Ovary (tissue), 10 donors: ENCODE measurements at regions of chr3 and their contacts with region 1.

Region 1: GRCh38 chr3:15205934-15206661 is at the start of gene CAPN7:
- DNase-seq: peak; percentile 93 to 97 (median 94)
- H3K4me3 ChIP-seq: peak within 1 kb of the TSS; percentile 52
- H3K27ac ChIP-seq: peak within 1 kb of the TSS; percentile 92 to 95
- H3K4me1 ChIP-seq: peaks cover 4% of the 10 kb centered on the region
- H3K27me3 ChIP-seq: no peaks in the 10 kb centered on the region
- CTCF ChIP-seq: peak in 2 of 3 donors; percentile 27 to 63
- EP300 ChIP-seq: no peak
- POLR2A ChIP-seq: peak; percentile 86
- total RNA-seq, gene CAPN7: 44.1 to 70.4 (median 54.8) TPM

Region 2: GRCh38 chr3:15300323-15301078 is 94.4 kb after region 1 on chr3:
- intact Hi-C with region 1: no loop called
- DNase-seq: no peak
- H3K4me3 ChIP-seq: no peak overlapping the region
- H3K27ac ChIP-seq: no peak overlapping the region
- H3K4me1 ChIP-seq: peaks cover 12% of the 10 kb centered on the region
- H3K27me3 ChIP-seq: no peaks in the 10 kb centered on the region
- CTCF ChIP-seq: no peak
- EP300 ChIP-seq: no peak
- POLR2A ChIP-seq: no peak

Region 3: DNA sequence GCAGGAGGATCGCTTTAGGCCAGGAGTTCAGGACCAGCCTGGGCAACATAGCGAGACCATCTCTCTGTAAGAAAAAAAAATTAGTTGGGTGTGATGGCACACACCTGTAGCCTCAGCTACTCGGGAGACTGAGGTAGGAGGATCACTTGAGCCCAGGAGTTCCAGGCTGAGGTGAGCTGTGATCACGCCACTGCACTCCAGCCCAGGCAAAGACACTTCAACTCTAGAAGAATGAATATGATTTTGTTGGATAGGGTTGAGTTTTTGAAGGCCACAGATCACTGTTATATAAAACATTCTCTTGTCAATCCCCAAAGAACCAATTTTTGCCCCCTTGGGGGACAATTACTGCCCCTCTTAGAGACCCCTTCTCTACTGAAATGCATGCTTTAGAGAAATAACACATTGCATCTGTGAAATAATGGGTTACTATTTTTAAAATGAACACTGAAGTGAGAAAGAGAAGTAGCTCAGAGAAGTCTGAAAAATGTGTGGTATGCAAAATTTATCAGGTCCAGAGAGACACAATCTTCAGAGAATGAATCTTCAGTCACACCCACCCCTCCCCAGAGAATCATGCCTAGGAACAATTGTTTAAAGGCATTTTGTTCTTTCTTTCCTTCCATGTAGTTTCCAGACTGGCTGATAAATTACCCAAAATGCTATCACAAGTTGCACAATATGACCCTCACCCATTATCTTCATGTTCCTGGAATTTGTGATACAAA is 178.6 kb after region 1 on chr3:
- intact Hi-C with region 1: loop called in 1 of 4 experiments (anchors 5 kb)
- DNase-seq: no peak
- H3K4me3 ChIP-seq: no peak overlapping the region
- H3K27ac ChIP-seq: no peak overlapping the region
- H3K4me1 ChIP-seq: peaks cover 2% of the 10 kb centered on the region
- H3K27me3 ChIP-seq: no peaks in the 10 kb centered on the region
- CTCF ChIP-seq: no peak
- EP300 ChIP-seq: no peak
- POLR2A ChIP-seq: no peak

Region 4: GRCh38 chr3:15405448-15406050 is 199.5 kb after region 1 on chr3:
- intact Hi-C with region 1: loop called in 1 of 4 experiments (anchors 10 kb)
- DNase-seq: peak in 1 of 5 donors; percentile 32
- H3K4me3 ChIP-seq: no peak overlapping the region
- H3K27ac ChIP-seq: no peak overlapping the region
- H3K4me1 ChIP-seq: no peaks in the 10 kb centered on the region
- H3K27me3 ChIP-seq: no peaks in the 10 kb centered on the region
- CTCF ChIP-seq: peak in 2 of 3 donors; percentile 56 to 65
- EP300 ChIP-seq: no peak
- POLR2A ChIP-seq: no peak

Region 5: DNA sequence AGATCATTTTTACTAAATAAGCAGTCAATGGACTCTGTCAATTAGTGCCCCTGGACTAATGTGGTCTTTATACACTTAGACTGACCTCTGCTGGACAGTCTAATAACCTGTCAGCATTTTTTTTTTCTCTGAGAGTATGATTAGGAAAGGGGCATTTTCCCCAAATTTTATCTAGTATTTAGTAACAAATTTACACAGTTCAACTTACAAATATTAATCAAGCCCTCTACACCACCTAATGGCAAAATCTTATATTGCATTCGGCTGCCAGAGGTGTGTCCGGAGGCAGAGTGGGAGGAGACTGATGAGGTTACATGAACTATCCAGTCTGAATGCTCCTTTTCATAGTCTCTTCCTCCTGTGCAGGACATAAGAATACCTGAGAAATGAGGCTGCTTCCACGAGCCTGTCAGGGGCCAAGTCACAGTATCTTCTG is 351.4 kb after region 1 on chr3:
- intact Hi-C with region 1: loop called in 2 of 4 experiments (anchors 5 to 10 kb)
- DNase-seq: peak in 2 of 5 donors; percentile 37 to 46
- H3K4me3 ChIP-seq: no peak overlapping the region
- H3K27ac ChIP-seq: no peak overlapping the region
- H3K4me1 ChIP-seq: no peaks in the 10 kb centered on the region
- H3K27me3 ChIP-seq: no peaks in the 10 kb centered on the region
- CTCF ChIP-seq: peak in 2 of 3 donors; percentile 55 to 58
- EP300 ChIP-seq: no peak
- POLR2A ChIP-seq: no peak

Region 6: GRCh38 chr3:15562560-15562959 is 356.5 kb after region 1 on chr3:
- intact Hi-C with region 1: loop called in 2 of 4 experiments (anchors 5 to 10 kb)
- DNase-seq: no peak
- H3K4me3 ChIP-seq: no peak overlapping the region
- H3K27ac ChIP-seq: no peak overlapping the region
- H3K4me1 ChIP-seq: no peaks in the 10 kb centered on the region
- H3K27me3 ChIP-seq: no peaks in the 10 kb centered on the region
- CTCF ChIP-seq: no peak
- EP300 ChIP-seq: no peak
- POLR2A ChIP-seq: no peak

Region 7: DNA sequence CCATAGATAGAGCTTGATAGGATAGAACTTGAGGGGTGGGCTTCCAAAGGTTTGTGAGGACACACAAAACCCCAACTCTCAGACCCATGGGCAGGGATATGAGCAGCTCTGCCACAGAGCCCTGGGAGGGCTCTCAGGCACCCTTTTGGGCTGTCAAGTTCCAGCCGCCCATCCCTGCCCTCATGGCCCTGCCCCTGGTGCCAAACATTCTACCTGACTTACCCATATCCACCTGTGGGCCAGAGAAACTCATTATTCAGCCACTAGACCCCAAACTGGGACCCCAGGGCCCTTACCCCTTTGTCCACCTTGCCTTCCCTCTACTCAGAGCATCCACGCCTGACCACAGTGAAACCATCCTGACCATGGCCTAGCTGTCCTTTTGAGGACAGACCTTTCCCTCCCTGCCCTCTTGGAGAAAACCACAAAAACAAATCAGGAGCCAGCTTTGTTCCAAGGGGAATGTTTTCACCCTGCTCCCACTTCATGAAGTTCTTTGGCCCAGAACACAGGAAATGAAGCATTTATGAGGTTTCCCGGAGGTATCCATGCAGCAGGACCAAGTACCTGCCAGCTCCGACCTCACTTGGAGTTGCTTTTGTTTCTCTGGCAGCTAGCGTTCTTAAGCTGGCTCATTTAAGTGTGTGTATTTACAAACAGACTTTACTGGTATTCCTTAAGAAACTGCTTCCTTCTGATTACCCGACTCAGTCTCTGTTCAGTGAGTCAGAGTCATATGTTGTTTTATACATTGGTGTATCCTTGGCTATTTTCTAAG is 934.2 kb after region 1 on chr3:
- intact Hi-C with region 1: no loop called
- DNase-seq: peak in 4 of 5 donors; percentile 40 to 60 (median 48)
- H3K4me3 ChIP-seq: no peak overlapping the region
- H3K27ac ChIP-seq: peak overlapping the region in 1 of 2 donors; percentile 61
- H3K4me1 ChIP-seq: peaks cover 23% of the 10 kb centered on the region
- H3K27me3 ChIP-seq: no peaks in the 10 kb centered on the region
- CTCF ChIP-seq: no peak
- EP300 ChIP-seq: no peak
- POLR2A ChIP-seq: no peak